CD8-positive, alpha-beta T cell (primary cell): ENCODE measurements at regions of chr16 and their contacts with region 1.

Region 1: GRCh38 chr16:67514382-67514828 is 14.2 kb upstream of the RIPOR1 start:
- DNase-seq: peak; percentile 65 to 91 (median 85)
- ATAC-seq: peak; percentile 93
- H3K4me3 ChIP-seq: no peak overlapping the region
- H3K4me3 Mint-ChIP-seq: no peak overlapping the region
- H3K27ac ChIP-seq: no peak overlapping the region
- H3K27ac Mint-ChIP-seq: no peak overlapping the region
- H3K4me1 ChIP-seq: peaks cover 19% of the 10 kb centered on the region
- H3K4me1 Mint-ChIP-seq: peaks cover 28% of the 10 kb centered on the region
- H3K27me3 ChIP-seq: no peaks in the 10 kb centered on the region
- H3K27me3 Mint-ChIP-seq: no peaks in the 10 kb centered on the region
- CTCF ChIP-seq: peak; percentile 77

Region 2: GRCh38 chr16:67115639-67116038 is 398.8 kb before region 1 on chr16:
- CTCF ChIA-PET with region 1: no interaction called
- POLR2A ChIA-PET with region 1: no interaction called
- intact Hi-C with region 1: no loop called
- DNase-seq: peak in 1 of 9 experiments; percentile 17
- ATAC-seq: no peak
- H3K4me3 ChIP-seq: no peak overlapping the region
- H3K4me3 Mint-ChIP-seq: no peak overlapping the region
- H3K27ac ChIP-seq: no peak overlapping the region
- H3K27ac Mint-ChIP-seq: peak overlapping the region; percentile 10
- H3K4me1 ChIP-seq: peaks cover 9% of the 10 kb centered on the region
- H3K4me1 Mint-ChIP-seq: peaks cover 40% of the 10 kb centered on the region
- H3K27me3 ChIP-seq: no peaks in the 10 kb centered on the region
- H3K27me3 Mint-ChIP-seq: no peaks in the 10 kb centered on the region
- CTCF ChIP-seq: no peak

Region 3: DNA sequence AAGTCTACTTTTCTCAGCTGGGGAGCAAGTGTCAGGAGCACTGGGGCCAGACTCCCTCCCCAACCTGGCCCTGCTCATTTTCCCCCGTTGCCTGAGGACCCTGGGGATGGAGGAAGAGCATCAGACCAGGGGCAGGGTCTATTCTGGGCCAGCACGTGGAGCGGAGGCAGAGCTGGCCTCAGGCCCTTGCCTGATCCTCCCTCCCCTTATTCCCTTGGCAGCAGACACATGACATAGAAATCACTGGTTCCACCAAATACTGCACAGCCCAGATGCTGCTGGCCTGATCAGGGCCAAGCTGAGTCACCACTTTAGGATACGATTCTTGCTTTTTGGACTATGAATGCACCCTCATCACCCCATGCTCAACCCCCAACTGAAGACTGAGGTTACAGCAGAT is 15.3 kb before region 1 on chr16:
- CTCF ChIA-PET with region 1: interaction called, 355 read pairs
- POLR2A ChIA-PET with region 1: no interaction called
- intact Hi-C with region 1: loop called (anchors 1 kb)
- DNase-seq: no peak
- ATAC-seq: no peak
- H3K4me3 ChIP-seq: no peak overlapping the region
- H3K4me3 Mint-ChIP-seq: no peak overlapping the region
- H3K27ac ChIP-seq: peak overlapping the region in 1 of 2 experiments; percentile 8
- H3K27ac Mint-ChIP-seq: no peak overlapping the region
- H3K4me1 ChIP-seq: peaks cover 10% of the 10 kb centered on the region
- H3K4me1 Mint-ChIP-seq: peaks cover 13% of the 10 kb centered on the region
- H3K27me3 ChIP-seq: no peaks in the 10 kb centered on the region
- H3K27me3 Mint-ChIP-seq: no peaks in the 10 kb centered on the region
- CTCF ChIP-seq: no peak

Region 4: DNA sequence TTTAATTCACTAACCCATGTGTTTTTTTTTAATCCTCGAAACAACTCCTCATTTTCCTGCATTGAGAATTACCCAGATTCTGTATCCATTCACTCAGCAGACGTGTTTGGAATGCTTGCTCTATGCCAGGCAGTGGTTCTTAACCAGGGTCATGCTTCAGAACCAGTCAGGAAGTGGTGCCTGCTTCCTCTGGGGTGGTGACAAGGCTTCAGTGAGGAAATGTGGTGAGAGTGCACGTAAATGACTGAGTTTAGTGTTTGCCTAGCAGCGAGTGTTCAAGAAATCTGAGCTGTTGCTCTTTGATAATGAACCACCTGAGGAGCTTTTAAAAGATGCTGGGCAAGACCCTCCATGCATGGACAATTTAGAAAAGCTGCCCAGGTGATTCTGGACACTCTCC is 1034.5 kb after region 1 on chr16:
- CTCF ChIA-PET with region 1: no interaction called
- POLR2A ChIA-PET with region 1: no interaction called
- intact Hi-C with region 1: no loop called
- DNase-seq: peak in 8 of 9 experiments; percentile 11 to 77 (median 52)
- ATAC-seq: peak; percentile 99
- H3K4me3 ChIP-seq: no peak overlapping the region
- H3K4me3 Mint-ChIP-seq: peak overlapping the region; percentile 9
- H3K27ac ChIP-seq: peak overlapping the region in 1 of 2 experiments; percentile 7
- H3K27ac Mint-ChIP-seq: peak overlapping the region; percentile 77
- H3K4me1 ChIP-seq: peaks cover 9% of the 10 kb centered on the region
- H3K4me1 Mint-ChIP-seq: peaks cover 39% of the 10 kb centered on the region
- H3K27me3 ChIP-seq: no peaks in the 10 kb centered on the region
- H3K27me3 Mint-ChIP-seq: no peaks in the 10 kb centered on the region
- CTCF ChIP-seq: no peak